ENCODE measurements at regions of chr3 and their contacts with region 1.

Region 1: DNA sequence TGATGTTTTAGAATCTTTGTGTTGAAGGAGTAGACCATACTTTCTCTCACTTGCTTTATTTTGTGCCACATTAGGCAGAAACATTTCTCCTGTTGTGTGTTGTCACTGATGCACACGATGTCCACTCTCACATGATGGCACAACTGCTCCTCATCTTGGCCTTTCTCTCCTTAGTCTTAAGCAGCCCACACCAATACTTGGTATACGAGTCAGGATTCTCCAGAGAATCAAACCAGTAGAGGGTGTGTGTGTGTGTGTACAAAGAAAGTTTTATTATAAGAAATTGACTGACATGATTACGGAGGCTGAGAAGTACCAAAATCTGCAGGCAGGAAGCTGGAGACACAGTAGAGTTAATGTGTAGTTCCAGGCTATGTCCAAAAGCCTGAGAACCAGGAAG is 187.1 kb downstream of the ALCAM start:
- DNase-seq: peak; percentile 58
- ATAC-seq: peak; percentile 72
- H3K4me3 ChIP-seq: no peak overlapping the region
- H3K27ac ChIP-seq: no peak overlapping the region
- H3K4me1 ChIP-seq: no peaks in the 10 kb centered on the region; the same call in 1 of the 2 replicates
- H3K27me3 ChIP-seq: no peaks in the 10 kb centered on the region
- CTCF ChIP-seq: 0 out of 2 replicates have a peak, but pooled peaks have one; percentile 12
- POLR2A ChIP-seq: no peak
- RAD21 ChIP-seq: no peak

Region 2: GRCh38 chr3:105836533-105836932 is 282.7 kb after region 1 on chr3:
- CTCF ChIA-PET with region 1: no interaction called
- POLR2A ChIA-PET with region 1: no interaction called
- dilution Hi-C with region 1: no loop called
- in situ Hi-C with region 1: no loop called
- intact Hi-C with region 1: loop called (anchors 10 kb)
- DNase-seq: peak; percentile 95
- ATAC-seq: peak; percentile 91
- H3K4me3 ChIP-seq: no peak overlapping the region
- H3K27ac ChIP-seq: no peak overlapping the region
- H3K4me1 ChIP-seq: peaks cover 7% of the 10 kb centered on the region
- H3K27me3 ChIP-seq: no peaks in the 10 kb centered on the region
- CTCF ChIP-seq: 0 out of 2 replicates have a peak, but pooled peaks have one; percentile 5
- POLR2A ChIP-seq: no peak
- RAD21 ChIP-seq: no peak

Measured in IMR-90 (cell line).